Panc1 (cell line): ENCODE measurements at regions of chr16 and their contacts with region 1.

Region 1: DNA sequence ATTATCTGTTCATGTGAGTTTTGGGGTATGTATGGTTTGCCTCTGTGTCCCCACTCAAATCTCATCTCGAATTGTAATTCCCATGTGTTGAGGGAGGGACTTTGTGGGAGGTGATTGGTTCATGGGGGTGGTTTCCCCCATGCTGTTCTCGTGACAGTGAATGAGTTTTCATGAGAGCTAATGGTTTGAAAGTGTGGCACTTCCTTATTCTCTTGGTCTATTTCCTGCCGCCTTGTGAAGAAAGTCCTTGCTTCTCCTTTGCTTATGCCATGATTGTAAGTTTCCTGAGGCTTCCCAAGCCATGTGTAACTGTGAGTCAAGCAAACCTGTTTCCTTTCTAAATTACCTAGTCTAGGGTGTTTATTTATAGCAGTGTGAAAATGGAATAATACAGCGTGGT is 128.1 kb upstream of the HS3ST4 start:
- DNase-seq: no peak
- ATAC-seq: no peak
- H3K4me3 ChIP-seq: no peak overlapping the region
- H3K27ac ChIP-seq: no peak overlapping the region
- H3K4me1 ChIP-seq: no peaks in the 10 kb centered on the region
- H3K27me3 ChIP-seq: no peaks in the 10 kb centered on the region
- CTCF ChIP-seq: no peak

Region 2: DNA sequence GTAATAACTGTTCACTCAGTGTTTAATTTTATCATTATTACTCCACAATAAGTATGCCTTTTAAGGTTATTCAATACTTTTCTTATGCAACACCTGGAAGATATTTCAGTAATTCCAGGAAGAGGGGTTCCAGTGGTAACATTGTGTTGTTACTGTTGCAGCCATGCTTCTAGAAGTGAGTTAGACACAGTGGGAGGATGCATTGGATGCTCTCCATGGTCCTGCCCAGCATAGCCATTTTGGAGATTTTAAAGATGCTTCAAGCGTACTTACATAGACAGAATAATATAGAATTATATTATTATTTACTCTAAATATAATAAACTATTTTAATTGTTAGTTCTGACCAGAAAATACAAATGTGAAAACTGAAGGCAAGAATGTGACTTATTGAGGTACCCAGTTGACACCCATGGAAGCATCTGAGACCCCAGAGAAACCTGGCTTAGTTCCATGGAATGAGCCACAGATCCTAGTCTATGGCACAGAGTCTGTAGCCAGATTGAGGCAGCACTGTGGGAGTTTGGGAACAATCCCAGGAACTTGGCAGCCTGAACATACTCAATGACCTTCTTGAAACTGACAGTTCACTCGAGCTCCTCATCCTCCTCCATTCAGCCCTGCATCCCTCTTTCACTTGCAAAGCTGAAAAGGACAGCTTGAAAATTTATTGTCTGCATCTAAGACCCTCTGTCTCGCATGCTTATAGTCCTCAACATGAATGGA is 62.0 kb before region 1 on chr16:
- CTCF ChIA-PET with region 1: no interaction called
- POLR2A ChIA-PET with region 1: no interaction called
- in situ Hi-C with region 1: no loop called
- intact Hi-C with region 1: loop called (anchors 2 kb)
- DNase-seq: no peak
- ATAC-seq: no peak
- H3K4me3 ChIP-seq: no peak overlapping the region
- H3K27ac ChIP-seq: no peak overlapping the region
- H3K4me1 ChIP-seq: no peaks in the 10 kb centered on the region
- H3K27me3 ChIP-seq: peaks cover 4% of the 10 kb centered on the region; the same call in 1 of the 2 replicates
- CTCF ChIP-seq: no peak